HCT116 (cell line): ENCODE measurements at regions of chr12 and their contacts with region 1.

Region 1: DNA sequence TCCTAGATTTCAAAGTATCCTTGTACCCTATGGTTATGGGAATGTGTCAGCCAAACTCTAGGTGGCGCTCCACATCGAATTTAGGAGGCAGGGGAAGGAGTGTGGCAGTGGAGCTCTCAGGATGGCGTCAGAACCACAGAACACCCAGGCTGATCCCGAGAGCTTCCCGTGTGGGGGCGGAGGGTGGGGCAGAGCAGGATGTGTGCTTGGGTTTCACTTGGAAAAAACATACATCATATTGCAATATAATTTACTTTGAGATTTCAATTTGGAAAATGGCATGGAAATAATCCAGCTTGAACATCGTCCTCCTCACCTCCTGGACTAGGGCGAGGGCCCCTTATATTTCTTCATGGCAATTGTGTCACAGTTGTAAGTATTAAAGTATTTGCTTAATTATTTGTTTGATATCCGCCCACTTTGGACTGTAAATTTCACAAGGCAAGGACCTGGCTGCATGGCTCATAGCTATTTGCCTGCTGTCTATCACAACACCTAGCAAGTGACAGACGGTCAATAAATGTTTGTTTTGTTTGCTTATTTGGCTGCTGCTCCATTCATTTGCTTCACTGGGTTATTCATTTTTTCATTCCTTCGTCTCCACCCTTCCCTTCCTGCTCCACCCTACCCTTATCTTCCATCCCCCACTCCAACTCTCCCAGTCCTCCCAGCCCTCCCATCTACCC is 221.5 kb upstream of the HMGA2 start:
- DNase-seq: peak; percentile 94
- ATAC-seq: peak; percentile 84
- H3K4me3 ChIP-seq: peak overlapping the region; percentile 45 to 54
- H3K27ac ChIP-seq: peak overlapping the region; percentile 94
- H3K4me1 ChIP-seq: peaks cover 59 to 80% of the 10 kb centered on the region in 2 experiments
- H3K27me3 ChIP-seq: no peaks in the 10 kb centered on the region
- CTCF ChIP-seq: peak; percentile 78 to 86 (median 85)
- POLR2A ChIP-seq: no peak
- RAD21 ChIP-seq: peak; percentile 93

Region 2: GRCh38 chr12:65335021-65335714 is 267.6 kb before region 1 on chr12:
- CTCF ChIA-PET with region 1: no interaction called
- POLR2A ChIA-PET with region 1: no interaction called
- RAD21 ChIA-PET with region 1: no interaction called
- intact Hi-C with region 1: no loop called
- DNase-seq: peak; percentile 76
- ATAC-seq: peak; percentile 86
- H3K4me3 ChIP-seq: peak overlapping the region; percentile 8 to 30; a peak in 3 of 4 replicates
- H3K27ac ChIP-seq: peak overlapping the region; percentile 72
- H3K4me1 ChIP-seq: peaks cover 45 to 47% of the 10 kb centered on the region in 2 experiments
- H3K27me3 ChIP-seq: no peaks in the 10 kb centered on the region
- CTCF ChIP-seq: no peak
- POLR2A ChIP-seq: no peak
- RAD21 ChIP-seq: peak; percentile 15; the same call in 1 of the 2 replicates

Region 3: GRCh38 chr12:65536876-65537661 is 65.7 kb before region 1 on chr12:
- CTCF ChIA-PET with region 1: interaction called, 7 read pairs
- POLR2A ChIA-PET with region 1: interaction called, 8 read pairs
- RAD21 ChIA-PET with region 1: interaction called in 1 of 2 experiments, 9 read pairs
- intact Hi-C with region 1: loop called (anchors 1 kb)
- DNase-seq: peak; percentile 100
- ATAC-seq: peak; percentile 74
- H3K4me3 ChIP-seq: no peak overlapping the region
- H3K27ac ChIP-seq: peak overlapping the region; percentile 99
- H3K4me1 ChIP-seq: peaks cover 60 to 68% of the 10 kb centered on the region in 2 experiments
- H3K27me3 ChIP-seq: no peaks in the 10 kb centered on the region
- CTCF ChIP-seq: no peak
- POLR2A ChIP-seq: no peak
- RAD21 ChIP-seq: no peak

Region 4: GRCh38 chr12:65631621-65632111 is 28.9 kb after region 1 on chr12:
- CTCF ChIA-PET with region 1: interaction called, 3 read pairs
- POLR2A ChIA-PET with region 1: interaction called, 10 read pairs
- RAD21 ChIA-PET with region 1: interaction called in 1 of 2 experiments, 3 read pairs
- intact Hi-C with region 1: loop called (anchors 2 kb)
- DNase-seq: peak; percentile 97
- ATAC-seq: peak; percentile 84
- H3K4me3 ChIP-seq: peak overlapping the region; percentile 7 to 16; a peak in 2 of 4 replicates
- H3K27ac ChIP-seq: peak overlapping the region; percentile 97
- H3K4me1 ChIP-seq: peaks cover 59 to 75% of the 10 kb centered on the region in 2 experiments
- H3K27me3 ChIP-seq: no peaks in the 10 kb centered on the region
- CTCF ChIP-seq: no peak
- POLR2A ChIP-seq: no peak
- RAD21 ChIP-seq: peak; percentile 38; the same call in 1 of the 2 replicates

Region 5: DNA sequence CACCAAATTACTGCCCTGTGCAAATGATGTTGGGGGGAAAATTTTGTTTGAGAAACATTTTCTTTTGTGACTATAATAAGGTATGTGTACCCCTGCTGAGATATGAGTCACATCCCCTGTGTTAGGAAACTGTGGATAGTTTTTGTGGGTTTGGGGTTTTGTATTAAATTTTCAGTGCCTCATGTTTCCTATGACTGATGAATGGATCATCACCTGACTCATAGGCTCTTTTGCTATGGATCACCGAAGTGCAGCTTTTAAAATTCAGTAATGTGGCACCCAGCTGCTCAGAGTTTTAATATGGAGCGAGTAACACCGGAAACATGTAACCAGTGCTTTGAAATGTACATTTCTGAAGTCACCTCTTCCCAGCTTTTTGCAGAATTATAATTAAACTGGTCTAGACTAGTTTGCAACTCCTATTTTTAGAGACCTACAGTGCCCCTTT is 54.2 kb after region 1 on chr12:
- CTCF ChIA-PET with region 1: interaction called, 10 read pairs
- POLR2A ChIA-PET with region 1: interaction called, 9 read pairs
- RAD21 ChIA-PET with region 1: interaction called in 1 of 2 experiments, 3 read pairs
- intact Hi-C with region 1: loop called (anchors 2 kb)
- DNase-seq: peak; percentile 97
- ATAC-seq: peak; percentile 84
- H3K4me3 ChIP-seq: no peak overlapping the region
- H3K27ac ChIP-seq: peak overlapping the region; percentile 100
- H3K4me1 ChIP-seq: peaks cover 47 to 72% of the 10 kb centered on the region in 2 experiments
- H3K27me3 ChIP-seq: no peaks in the 10 kb centered on the region
- CTCF ChIP-seq: no peak
- POLR2A ChIP-seq: no peak
- RAD21 ChIP-seq: peak; percentile 56; the same call in 1 of the 2 replicates

Region 6: GRCh38 chr12:65728848-65729793 is 126.4 kb after region 1 on chr12:
- CTCF ChIA-PET with region 1: no interaction called
- POLR2A ChIA-PET with region 1: interaction called, 7 read pairs
- RAD21 ChIA-PET with region 1: no interaction called
- intact Hi-C with region 1: loop called (anchors 5 kb)
- DNase-seq: peak; percentile 59
- ATAC-seq: peak; percentile 71
- H3K4me3 ChIP-seq: peak overlapping the region; percentile 57 to 69
- H3K27ac ChIP-seq: peak overlapping the region; percentile 98
- H3K4me1 ChIP-seq: peaks cover 47 to 62% of the 10 kb centered on the region in 2 experiments
- H3K27me3 ChIP-seq: no peaks in the 10 kb centered on the region
- CTCF ChIP-seq: no peak
- POLR2A ChIP-seq: no peak
- RAD21 ChIP-seq: no peak

Region 7: GRCh38 chr12:65941388-65941787 is 338.6 kb after region 1 on chr12:
- CTCF ChIA-PET with region 1: interaction called, 4 read pairs
- POLR2A ChIA-PET with region 1: interaction called, 3 read pairs
- RAD21 ChIA-PET with region 1: no interaction called
- intact Hi-C with region 1: loop called (anchors 5 kb)
- DNase-seq: no peak
- ATAC-seq: no peak
- H3K4me3 ChIP-seq: no peak overlapping the region
- H3K27ac ChIP-seq: peak overlapping the region; percentile 66
- H3K4me1 ChIP-seq: peaks cover 93 to 100% of the 10 kb centered on the region in 2 experiments
- H3K27me3 ChIP-seq: no peaks in the 10 kb centered on the region
- CTCF ChIP-seq: no peak
- POLR2A ChIP-seq: no peak
- RAD21 ChIP-seq: no peak

Region 8: DNA sequence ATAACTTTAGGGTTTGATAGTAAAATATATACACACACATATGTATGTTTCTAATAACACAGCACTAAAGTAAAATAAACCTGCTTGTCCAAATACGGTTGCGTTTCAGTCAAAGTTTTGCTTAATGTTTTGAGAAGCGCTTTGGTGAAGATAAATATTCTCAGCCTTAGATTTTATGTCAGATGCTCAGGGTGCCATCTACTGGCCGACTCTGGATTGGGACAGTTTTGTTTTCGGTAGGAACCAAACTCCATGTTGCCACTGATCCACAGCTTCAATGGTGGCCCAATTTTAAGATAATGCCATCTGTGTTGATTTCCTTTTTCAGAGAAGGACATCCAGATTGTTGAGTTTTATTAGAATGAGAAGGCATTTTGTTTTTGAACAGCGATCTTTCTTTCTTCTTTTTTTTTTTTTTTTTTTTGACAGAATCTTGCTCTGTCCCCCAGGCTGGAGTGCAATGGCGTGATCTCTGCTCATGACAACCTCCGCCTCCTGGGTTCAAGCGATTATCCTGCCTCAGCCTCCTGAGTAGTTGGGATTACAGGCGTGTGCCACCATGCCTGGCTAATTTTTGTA is 484.7 kb after region 1 on chr12:
- CTCF ChIA-PET with region 1: interaction called, 5 read pairs
- POLR2A ChIA-PET with region 1: no interaction called
- RAD21 ChIA-PET with region 1: no interaction called
- intact Hi-C with region 1: loop called (anchors 5 kb)
- DNase-seq: peak; percentile 68
- ATAC-seq: peak; percentile 91
- H3K4me3 ChIP-seq: no peak overlapping the region
- H3K27ac ChIP-seq: no peak overlapping the region
- H3K4me1 ChIP-seq: peaks cover 0 to 14% of the 10 kb centered on the region in 2 experiments; a peak in 1 of 4 replicates
- H3K27me3 ChIP-seq: no peaks in the 10 kb centered on the region
- CTCF ChIP-seq: peak; percentile 75 to 97 (median 90)
- POLR2A ChIP-seq: no peak
- RAD21 ChIP-seq: peak; percentile 95